ENCODE measurements at regions of chr7 and their contacts with region 1.

Region 1: GRCh38 chr7:149090397-149091195 is at the start of gene ZNF786:
- DNase-seq: peak; percentile 80
- ATAC-seq: peak; percentile 91
- H3K4me3 ChIP-seq: peak within 1 kb of the TSS; percentile 73 to 97 (median 85)
- H3K27ac ChIP-seq: peak within 1 kb of the TSS; percentile 86
- H3K4me1 ChIP-seq: peaks cover 25% of the 10 kb centered on the region
- H3K27me3 ChIP-seq: no peaks in the 10 kb centered on the region; a peak in 1 of 5 replicates
- CTCF ChIP-seq: peak; percentile 91
- EP300 ChIP-seq: 0 out of 4 replicates have a peak, but pooled peaks of 1 of the 2 experiments have one; percentile 6
- POLR2A ChIP-seq: peak; percentile 90 to 94
- RAD21 ChIP-seq: peak; percentile 93
- total RNA-seq, gene ZNF786: 4.0 and 4.3 TPM in 2 replicates

Region 2: GRCh38 chr7:149005241-149006050 is 85.2 kb before region 1 on chr7:
- CTCF ChIA-PET with region 1: interaction called, 11 read pairs
- POLR2A ChIA-PET with region 1: no interaction called
- in situ Hi-C with region 1: no loop called
- intact Hi-C with region 1: loop called (anchors 1 kb)
- DNase-seq: peak; percentile 62
- ATAC-seq: peak; percentile 76
- H3K4me3 ChIP-seq: no peak overlapping the region
- H3K27ac ChIP-seq: no peak overlapping the region
- H3K4me1 ChIP-seq: peaks cover 6% of the 10 kb centered on the region; the same call in 1 of the 2 replicates
- H3K27me3 ChIP-seq: no peaks in the 10 kb centered on the region
- CTCF ChIP-seq: peak; percentile 80
- EP300 ChIP-seq: no peak
- POLR2A ChIP-seq: no peak
- RAD21 ChIP-seq: peak; percentile 39; the same call in 1 of the 2 replicates

Region 3: GRCh38 chr7:149028346-149029109 is 62.1 kb before region 1 on chr7 and contains the start of gene PDIA4:
- CTCF ChIA-PET with region 1: no interaction called
- POLR2A ChIA-PET with region 1: no interaction called
- in situ Hi-C with region 1: no loop called
- intact Hi-C with region 1: loop called (anchors 2 kb)
- DNase-seq: peak; percentile 98
- ATAC-seq: peak; percentile 95
- H3K4me3 ChIP-seq: peak within 1 kb of the TSS; percentile 90 to 95 (median 93)
- H3K27ac ChIP-seq: peak within 1 kb of the TSS; percentile 95
- H3K4me1 ChIP-seq: peaks cover 42% of the 10 kb centered on the region
- H3K27me3 ChIP-seq: no peaks in the 10 kb centered on the region; a peak in 1 of 5 replicates
- CTCF ChIP-seq: peak; percentile 3; the same call in 1 of the 2 replicates
- EP300 ChIP-seq: no peak; a peak in 1 of 4 replicates
- POLR2A ChIP-seq: peak; percentile 88 to 90
- RAD21 ChIP-seq: peak; percentile 51; the same call in 1 of the 2 replicates
- total RNA-seq, gene PDIA4: 171 and 402 TPM in 2 replicates

Region 4: DNA sequence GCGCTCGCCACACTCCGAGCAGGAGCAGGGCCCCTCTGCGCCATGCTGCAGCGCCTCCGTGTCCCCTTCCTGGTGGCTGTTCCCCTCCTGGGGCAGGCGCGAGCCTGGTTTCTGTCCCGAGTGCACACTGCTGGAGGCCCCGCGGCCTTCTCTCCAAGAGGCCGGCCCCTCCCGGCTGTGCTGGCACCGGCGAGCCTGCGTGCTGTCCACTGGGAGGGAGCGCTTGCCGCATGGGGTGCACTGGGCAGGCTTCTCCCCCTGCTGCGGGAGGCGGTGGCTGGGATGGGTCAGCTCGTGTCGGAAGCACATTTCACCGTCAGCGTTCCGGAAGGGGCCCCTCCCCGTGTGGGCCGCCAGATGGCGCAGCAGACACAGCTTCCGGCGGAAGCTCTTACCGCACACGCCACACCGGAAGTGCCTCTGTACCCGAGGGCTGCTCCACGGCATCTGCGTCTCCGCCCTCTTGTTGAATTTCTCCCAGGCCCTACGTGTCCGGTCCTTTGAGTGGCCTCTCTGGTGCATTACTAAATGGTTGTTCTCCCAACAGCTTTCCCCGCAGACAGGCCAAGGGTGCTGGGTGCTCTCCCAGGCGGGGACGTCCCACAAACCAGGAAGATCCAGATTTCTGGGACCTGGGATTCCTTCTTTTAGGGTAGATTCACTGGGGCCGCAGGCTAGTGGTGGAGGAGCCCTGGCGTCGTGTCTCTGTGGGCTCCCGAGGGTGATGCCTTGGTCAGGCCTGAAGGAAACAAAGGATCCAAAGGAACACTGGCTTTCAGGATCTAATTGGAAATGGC is 18.8 kb before region 1 on chr7:
- CTCF ChIA-PET with region 1: interaction called, 5 read pairs
- POLR2A ChIA-PET with region 1: no interaction called
- in situ Hi-C with region 1: no loop called
- intact Hi-C with region 1: loop called (anchors 1 kb)
- DNase-seq: no peak
- ATAC-seq: peak; percentile 69
- H3K4me3 ChIP-seq: no peak overlapping the region
- H3K27ac ChIP-seq: no peak overlapping the region
- H3K4me1 ChIP-seq: no peaks in the 10 kb centered on the region
- H3K27me3 ChIP-seq: no peaks in the 10 kb centered on the region
- CTCF ChIP-seq: peak; percentile 61
- EP300 ChIP-seq: no peak
- POLR2A ChIP-seq: no peak
- RAD21 ChIP-seq: no peak

Region 5: DNA sequence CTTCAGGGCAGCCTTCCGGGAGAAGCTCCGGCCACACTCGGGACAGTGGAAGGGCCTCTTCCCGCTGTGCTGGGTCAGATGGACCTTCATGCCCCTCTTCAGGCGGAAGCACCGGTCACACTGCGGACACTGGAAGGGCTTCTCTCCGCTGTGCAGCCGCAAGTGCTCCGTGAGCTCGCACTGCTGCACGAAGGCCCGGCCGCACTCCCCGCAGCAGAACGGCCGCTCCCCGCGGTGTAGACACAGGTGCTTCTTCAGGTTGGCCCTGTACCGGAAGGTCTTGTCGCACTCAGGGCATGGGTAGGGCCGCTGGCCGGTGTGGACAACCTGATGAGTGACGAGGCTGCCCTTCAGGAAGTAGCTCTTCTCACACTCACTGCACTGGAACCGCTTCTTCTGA is 14.2 kb after region 1 on chr7:
- CTCF ChIA-PET with region 1: no interaction called
- POLR2A ChIA-PET with region 1: no interaction called
- in situ Hi-C with region 1: no loop called
- intact Hi-C with region 1: no loop called
- DNase-seq: no peak
- ATAC-seq: no peak
- H3K4me3 ChIP-seq: no peak overlapping the region
- H3K27ac ChIP-seq: no peak overlapping the region
- H3K4me1 ChIP-seq: no peaks in the 10 kb centered on the region
- H3K27me3 ChIP-seq: no peaks in the 10 kb centered on the region
- CTCF ChIP-seq: no peak
- EP300 ChIP-seq: no peak
- POLR2A ChIP-seq: no peak
- RAD21 ChIP-seq: no peak

Region 6: DNA sequence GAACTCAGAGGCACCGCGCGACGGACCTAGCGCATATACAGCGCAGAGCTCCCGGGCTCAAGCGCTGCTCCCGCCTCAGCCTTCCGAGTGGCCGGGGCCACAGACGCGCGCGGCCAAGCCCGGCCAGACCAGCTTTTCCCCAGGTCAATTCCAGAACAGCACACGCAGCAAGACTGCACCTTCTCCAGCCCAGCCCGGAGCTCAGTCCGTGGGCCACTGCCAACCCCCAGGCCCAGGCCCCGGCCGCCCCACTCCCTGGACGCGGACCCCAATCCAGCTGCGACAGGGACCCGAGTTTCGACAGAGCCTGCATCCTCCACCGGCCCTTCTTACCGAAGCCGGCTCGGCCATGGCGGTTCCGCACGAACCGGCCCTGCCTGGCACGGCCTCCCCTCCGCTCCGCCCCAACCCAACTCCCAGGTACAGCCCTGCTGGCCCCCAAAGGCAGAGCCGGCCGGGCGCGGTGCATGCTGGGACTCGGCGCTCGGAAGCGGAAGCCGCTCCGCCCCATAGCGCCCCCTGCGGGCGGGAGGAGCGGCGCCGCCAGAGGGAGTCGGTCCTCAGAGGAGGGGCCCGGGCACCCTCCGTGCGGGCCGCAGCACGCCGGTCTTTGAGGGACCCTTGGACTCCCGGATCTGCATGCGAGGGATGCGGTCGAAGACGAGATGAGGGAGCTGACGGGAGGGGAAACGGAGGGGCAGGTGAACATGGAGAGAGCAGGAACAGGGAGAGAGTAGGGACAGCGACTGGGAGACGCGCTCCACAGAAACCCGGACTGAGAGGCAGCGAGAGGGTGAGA is 35.5 kb after region 1 on chr7 and contains the start of gene ZNF425:
- CTCF ChIA-PET with region 1: interaction called, 15 read pairs
- POLR2A ChIA-PET with region 1: no interaction called
- in situ Hi-C with region 1: no loop called
- intact Hi-C with region 1: loop called (anchors 1 kb)
- DNase-seq: peak; percentile 85
- ATAC-seq: peak; percentile 92
- H3K4me3 ChIP-seq: peak within 1 kb of the TSS; percentile 81 to 98 (median 92)
- H3K27ac ChIP-seq: peak within 1 kb of the TSS; percentile 86
- H3K4me1 ChIP-seq: peaks cover 18% of the 10 kb centered on the region
- H3K27me3 ChIP-seq: no peaks in the 10 kb centered on the region; a peak in 2 of 5 replicates
- CTCF ChIP-seq: peak; percentile 97
- EP300 ChIP-seq: peak in 1 of 2 experiments; percentile 62; a peak in 1 of 4 replicates
- POLR2A ChIP-seq: peak; percentile 96 to 97
- RAD21 ChIP-seq: peak; percentile 85; the same call in 1 of the 2 replicates
- total RNA-seq, gene ZNF425: 0.97 and 1.1 TPM in 2 replicates

Measured in HepG2 (cell line).